ENCODE measurements at regions of chr20 and their contacts with region 1.

Region 1: GRCh38 chr20:37392421-37393178 is 46.7 kb downstream of the SRC start:
- DNase-seq: no peak
- H3K4me3 ChIP-seq: no peak overlapping the region
- H3K27ac ChIP-seq: no peak overlapping the region
- H3K4me1 ChIP-seq: peaks cover 23% of the 10 kb centered on the region
- H3K27me3 ChIP-seq: no peaks in the 10 kb centered on the region
- CTCF ChIP-seq: peak; percentile 23 to 34

Region 2: DNA sequence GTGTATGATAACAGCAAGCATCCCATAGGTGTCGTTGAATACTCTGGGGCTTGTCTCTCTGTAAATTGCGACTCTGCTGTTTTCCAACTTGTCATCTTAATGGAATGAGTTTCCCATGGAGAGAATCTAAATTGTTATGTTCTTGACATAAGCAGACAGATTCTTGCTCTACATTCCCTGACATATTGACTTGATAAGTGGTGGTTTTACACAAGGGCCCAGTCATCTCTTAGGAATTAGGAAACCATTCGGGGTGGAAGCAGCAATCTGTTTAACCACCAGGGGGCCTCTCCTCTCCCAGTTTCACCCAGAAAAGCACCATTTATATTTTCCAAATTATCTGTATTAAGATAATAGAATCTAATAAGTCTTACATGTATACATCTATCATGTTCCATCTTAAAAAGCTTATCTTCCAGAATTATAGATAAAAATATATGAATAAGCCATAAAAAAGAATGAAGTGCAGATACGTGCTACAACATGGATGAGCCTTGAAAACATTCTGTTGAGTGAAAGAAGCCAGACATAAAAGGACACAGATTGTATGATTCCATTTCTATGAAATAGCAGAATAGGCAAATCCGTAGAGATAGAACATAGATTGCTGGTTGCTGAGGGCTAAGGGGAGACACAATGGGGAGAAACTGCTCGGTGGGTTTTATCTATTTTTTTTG is 190.2 kb before region 1 on chr20:
- CTCF ChIA-PET with region 1: no interaction called
- dilution Hi-C with region 1: no loop called
- in situ Hi-C with region 1: no loop called
- intact Hi-C with region 1: loop called (anchors 5 kb)
- DNase-seq: peak; percentile 77
- H3K4me3 ChIP-seq: no peak overlapping the region
- H3K27ac ChIP-seq: peak overlapping the region; percentile 64
- H3K4me1 ChIP-seq: peaks cover 7% of the 10 kb centered on the region
- H3K27me3 ChIP-seq: no peaks in the 10 kb centered on the region
- CTCF ChIP-seq: peak; percentile 80 to 88

Region 3: GRCh38 chr20:37270576-37271420 is 121.8 kb before region 1 on chr20:
- CTCF ChIA-PET with region 1: no interaction called
- dilution Hi-C with region 1: no loop called
- in situ Hi-C with region 1: loop called in 1 of 2 experiments (anchors 5 kb)
- intact Hi-C with region 1: no loop called
- DNase-seq: no peak
- H3K4me3 ChIP-seq: no peak overlapping the region
- H3K27ac ChIP-seq: no peak overlapping the region
- H3K4me1 ChIP-seq: peaks cover 4% of the 10 kb centered on the region
- H3K27me3 ChIP-seq: no peaks in the 10 kb centered on the region
- CTCF ChIP-seq: no peak

Region 4: DNA sequence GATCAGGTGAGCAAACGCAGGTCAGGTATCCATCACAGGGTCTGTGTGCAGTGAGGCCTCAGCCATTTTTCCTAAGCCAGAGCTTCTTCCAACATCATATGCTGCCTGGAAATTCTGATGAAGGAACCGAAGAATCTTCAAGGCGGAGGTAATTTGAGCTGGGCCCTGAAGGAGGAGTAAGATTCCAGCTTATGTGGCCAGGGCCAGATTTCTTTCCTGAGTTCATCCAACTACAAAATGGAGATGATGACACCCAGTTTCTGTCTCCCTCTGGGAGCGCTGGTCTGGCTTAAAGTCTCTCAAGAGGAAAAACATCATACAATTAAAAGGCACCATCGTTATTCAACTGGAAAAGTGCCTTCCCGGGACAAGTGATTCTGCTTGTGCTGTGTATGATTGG is 110.0 kb before region 1 on chr20:
- CTCF ChIA-PET with region 1: no interaction called
- dilution Hi-C with region 1: loop called (anchors 5 kb)
- in situ Hi-C with region 1: loop called in 1 of 2 experiments (anchors 10 kb)
- intact Hi-C with region 1: no loop called
- DNase-seq: peak; percentile 55
- H3K4me3 ChIP-seq: no peak overlapping the region
- H3K27ac ChIP-seq: no peak overlapping the region
- H3K4me1 ChIP-seq: peaks cover 7% of the 10 kb centered on the region
- H3K27me3 ChIP-seq: no peaks in the 10 kb centered on the region
- CTCF ChIP-seq: peak; percentile 62 to 80

Region 5: DNA sequence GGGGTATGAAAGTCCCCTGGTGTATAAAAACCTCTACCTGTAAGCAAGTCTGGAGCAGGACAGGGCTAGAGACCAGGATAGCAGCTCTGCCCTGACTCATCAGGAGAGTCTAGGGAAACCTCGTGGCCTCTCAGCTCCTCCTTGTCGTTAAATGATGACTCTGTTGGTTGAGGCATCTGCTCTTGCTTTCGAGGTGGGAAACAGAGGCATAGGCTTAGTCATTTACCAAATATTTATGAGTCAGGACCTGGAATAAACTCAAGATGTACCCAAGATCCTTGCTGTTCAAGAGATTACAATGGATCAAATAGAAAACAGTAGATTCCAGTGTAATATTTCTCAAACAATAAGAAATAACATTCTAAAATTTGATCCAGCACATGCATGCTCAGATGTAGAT is 97.6 kb before region 1 on chr20:
- CTCF ChIA-PET with region 1: no interaction called
- dilution Hi-C with region 1: no loop called
- in situ Hi-C with region 1: no loop called
- intact Hi-C with region 1: loop called (anchors 1 kb)
- DNase-seq: peak; percentile 99
- H3K4me3 ChIP-seq: peak overlapping the region in 1 of 3 experiments; percentile 18
- H3K27ac ChIP-seq: peak overlapping the region; percentile 90
- H3K4me1 ChIP-seq: peaks cover 61% of the 10 kb centered on the region
- H3K27me3 ChIP-seq: no peaks in the 10 kb centered on the region
- CTCF ChIP-seq: no peak

Region 6: DNA sequence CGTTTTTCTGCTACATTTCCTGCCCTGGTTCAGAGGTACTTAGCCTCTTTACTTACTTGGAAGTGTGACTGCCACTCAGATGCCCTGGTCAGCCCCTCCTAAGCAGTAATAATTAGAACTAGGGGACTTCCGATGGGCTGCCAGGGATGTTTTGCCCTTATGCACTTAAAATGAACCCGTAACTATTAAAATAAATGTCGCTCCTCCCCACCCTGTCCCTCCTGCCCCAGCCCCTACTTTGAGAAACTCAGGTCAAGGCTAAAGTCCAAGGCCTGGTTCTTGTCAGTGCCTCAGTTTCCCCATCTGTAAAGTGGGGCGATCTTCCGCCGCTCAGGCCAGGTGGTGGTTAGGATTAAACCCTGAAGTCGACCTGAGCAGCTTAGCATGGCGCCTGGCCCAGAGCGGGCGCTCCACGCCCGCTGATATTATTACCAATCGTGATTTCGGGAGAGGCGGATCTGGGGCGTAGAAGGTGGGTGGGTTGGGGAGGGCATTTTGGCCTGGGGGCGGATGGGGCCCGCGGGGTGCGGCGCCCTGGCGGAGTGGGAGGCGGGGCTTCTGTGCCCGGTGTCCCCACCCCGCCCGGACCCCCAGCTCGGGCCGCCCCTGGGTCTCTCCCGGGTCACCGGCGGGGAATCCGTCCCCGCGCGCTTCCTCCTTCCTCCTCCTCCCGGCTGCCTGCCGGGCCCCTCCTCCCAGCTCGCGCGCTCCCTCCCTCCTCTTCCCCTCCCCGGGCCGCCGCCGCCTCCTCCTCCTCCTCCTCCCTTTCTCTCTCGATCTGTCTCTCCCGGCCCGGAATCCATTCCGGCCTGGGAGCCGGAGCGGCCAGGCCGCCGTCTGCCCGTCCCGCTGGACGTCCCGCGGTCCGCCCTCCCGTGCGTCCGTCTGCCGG is 47.0 kb before region 1 on chr20 and contains the start of gene SRC:
- CTCF ChIA-PET with region 1: no interaction called
- dilution Hi-C with region 1: loop called (anchors 5 kb)
- in situ Hi-C with region 1: no loop called
- intact Hi-C with region 1: no loop called
- DNase-seq: peak; percentile 77
- H3K4me3 ChIP-seq: peak within 1 kb of the TSS; percentile 47 to 61 (median 52)
- H3K27ac ChIP-seq: no peak within 1 kb of the TSS
- H3K4me1 ChIP-seq: peaks cover 42% of the 10 kb centered on the region
- H3K27me3 ChIP-seq: no peaks in the 10 kb centered on the region
- CTCF ChIP-seq: peak in 1 of 2 donors; percentile 2
- total RNA-seq, gene SRC: 52.7 to 60.2 TPM

Region 7: GRCh38 chr20:37457921-37458320 is 65.3 kb after region 1 on chr20:
- CTCF ChIA-PET with region 1: no interaction called
- dilution Hi-C with region 1: loop called (anchors 5 kb)
- in situ Hi-C with region 1: no loop called
- intact Hi-C with region 1: no loop called
- DNase-seq: no peak
- H3K4me3 ChIP-seq: no peak overlapping the region
- H3K27ac ChIP-seq: no peak overlapping the region
- H3K4me1 ChIP-seq: no peaks in the 10 kb centered on the region
- H3K27me3 ChIP-seq: no peaks in the 10 kb centered on the region
- CTCF ChIP-seq: no peak